Naive thymus-derived CD4-positive, alpha-beta T cell (primary cell): ENCODE measurements at regions of chr12 and their contacts with region 1.

Region 1: DNA sequence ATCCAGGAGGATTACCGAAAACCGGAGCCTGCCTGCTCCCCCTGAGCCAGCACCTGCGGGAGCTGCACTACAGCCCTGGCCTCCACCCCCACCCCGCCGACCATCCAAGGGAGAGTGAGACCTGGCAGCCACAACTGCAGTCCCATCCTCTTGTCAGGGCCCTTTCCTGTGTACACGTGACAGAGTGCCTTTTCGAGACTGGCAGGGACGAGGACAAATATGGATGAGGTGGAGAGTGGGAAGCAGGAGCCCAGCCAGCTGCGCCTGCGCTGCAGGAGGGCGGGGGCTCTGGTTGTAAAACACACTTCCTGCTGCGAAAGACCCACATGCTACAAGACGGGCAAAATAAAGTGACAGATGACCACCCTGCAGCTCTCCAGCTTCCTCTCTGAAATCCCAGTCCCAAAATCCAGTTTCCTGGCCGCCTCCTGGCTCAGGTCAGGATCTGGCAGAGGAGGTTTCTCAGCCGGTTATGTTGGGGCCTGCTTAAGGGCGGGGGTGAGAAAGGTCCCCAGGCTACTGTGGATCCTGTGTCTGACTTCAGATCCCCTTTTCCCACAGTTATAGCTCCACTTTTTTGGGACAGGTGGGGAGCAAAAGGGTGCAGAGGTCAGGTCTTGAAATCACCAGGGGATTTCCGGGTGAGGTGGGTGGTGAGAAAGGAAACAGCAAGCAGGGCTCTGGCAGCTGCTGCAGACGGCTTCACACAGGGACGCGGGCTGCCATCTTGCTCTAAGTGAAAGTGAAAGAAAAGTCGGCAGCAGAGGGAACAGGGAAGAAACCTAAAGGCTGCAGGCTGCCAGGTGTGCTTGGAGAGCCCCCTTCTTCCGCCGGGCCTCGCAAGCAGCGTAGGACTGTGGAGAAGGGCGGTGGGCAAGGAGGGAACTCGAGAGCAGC is at the start of gene TAPBPL:
- DNase-seq: peak; percentile 49 to 93 (median 87)
- ATAC-seq: peak; percentile 94
- H3K4me3 ChIP-seq: peak within 1 kb of the TSS; percentile 83
- H3K4me3 Mint-ChIP-seq: peak within 1 kb of the TSS; percentile 96 to 100 (median 98)
- H3K27ac ChIP-seq: peak within 1 kb of the TSS; percentile 96
- H3K27ac Mint-ChIP-seq: peak within 1 kb of the TSS; percentile 96 to 100 (median 99)
- H3K4me1 ChIP-seq: peaks cover 50% of the 10 kb centered on the region in 2 donors
- H3K4me1 Mint-ChIP-seq: peaks cover 50 to 84% (median 73%) of the 10 kb centered on the region in 7 donors
- H3K27me3 ChIP-seq: no peaks in the 10 kb centered on the region
- H3K27me3 Mint-ChIP-seq: no peaks in the 10 kb centered on the region
- total RNA-seq, gene TAPBPL: 23.0 to 65.4 (median 52.9) TPM

Region 2: GRCh38 chr12:6434205-6435140 is 17.1 kb before region 1 on chr12:
- CTCF ChIA-PET with region 1: interaction called, 5 read pairs
- POLR2A ChIA-PET with region 1: interaction called, 726 read pairs
- intact Hi-C with region 1: no loop called
- DNase-seq: peak in 7 of 9 donors; percentile 41 to 60 (median 56)
- ATAC-seq: peak; percentile 80
- H3K4me3 ChIP-seq: peak overlapping the region; percentile 30
- H3K4me3 Mint-ChIP-seq: peak overlapping the region; percentile 55 to 85 (median 76)
- H3K27ac ChIP-seq: peak overlapping the region; percentile 68
- H3K27ac Mint-ChIP-seq: peak overlapping the region; percentile 90 to 98 (median 92)
- H3K4me1 ChIP-seq: peaks cover 18 to 30% of the 10 kb centered on the region in 2 donors
- H3K4me1 Mint-ChIP-seq: peaks cover 24 to 59% (median 53%) of the 10 kb centered on the region in 7 donors
- H3K27me3 ChIP-seq: no peaks in the 10 kb centered on the region
- H3K27me3 Mint-ChIP-seq: no peaks in the 10 kb centered on the region